Activated CD4-positive, alpha-beta memory T cell treated with anti-CD3 and anti-CD28 coated beads for 36 hours (primary cell): ENCODE measurements at regions of chr19 and their contacts with region 1.

Region 1: GRCh38 chr19:10928525-10929401 is at the starts of genes TIMM29 and YIPF2:
- DNase-seq: peak; percentile 97
- H3K4me3 Mint-ChIP-seq: peak within 1 kb of the TSS; percentile 92
- H3K27ac Mint-ChIP-seq: peak within 1 kb of the TSS; percentile 81
- H3K4me1 Mint-ChIP-seq: peaks cover 21% of the 10 kb centered on the region
- H3K27me3 Mint-ChIP-seq: no peaks in the 10 kb centered on the region
- total RNA-seq, gene TIMM29: 15.6 to 16.4 TPM
- total RNA-seq, gene YIPF2: 25.6 to 28.4 TPM

Region 2: GRCh38 chr19:10784257-10784656 is 144.5 kb before region 1 on chr19:
- CTCF ChIA-PET with region 1: no interaction called
- POLR2A ChIA-PET with region 1: no interaction called
- intact Hi-C with region 1: no loop called
- DNase-seq: no peak
- H3K4me3 Mint-ChIP-seq: no peak overlapping the region
- H3K27ac Mint-ChIP-seq: no peak overlapping the region
- H3K4me1 Mint-ChIP-seq: no peaks in the 10 kb centered on the region
- H3K27me3 Mint-ChIP-seq: no peaks in the 10 kb centered on the region

Region 3: GRCh38 chr19:10876459-10877240 is 52.1 kb before region 1 on chr19:
- CTCF ChIA-PET with region 1: interaction called, 3 read pairs
- POLR2A ChIA-PET with region 1: no interaction called
- intact Hi-C with region 1: loop called (anchors 2 kb)
- DNase-seq: peak; percentile 40
- H3K4me3 Mint-ChIP-seq: no peak overlapping the region
- H3K27ac Mint-ChIP-seq: peak overlapping the region; percentile 52
- H3K4me1 Mint-ChIP-seq: peaks cover 38% of the 10 kb centered on the region
- H3K27me3 Mint-ChIP-seq: no peaks in the 10 kb centered on the region

Region 4: GRCh38 chr19:10887616-10888367 is 41.0 kb before region 1 on chr19:
- CTCF ChIA-PET with region 1: no interaction called
- POLR2A ChIA-PET with region 1: no interaction called
- intact Hi-C with region 1: no loop called
- DNase-seq: no peak
- H3K4me3 Mint-ChIP-seq: no peak overlapping the region
- H3K27ac Mint-ChIP-seq: no peak overlapping the region
- H3K4me1 Mint-ChIP-seq: peaks cover 2% of the 10 kb centered on the region
- H3K27me3 Mint-ChIP-seq: no peaks in the 10 kb centered on the region

Region 5: DNA sequence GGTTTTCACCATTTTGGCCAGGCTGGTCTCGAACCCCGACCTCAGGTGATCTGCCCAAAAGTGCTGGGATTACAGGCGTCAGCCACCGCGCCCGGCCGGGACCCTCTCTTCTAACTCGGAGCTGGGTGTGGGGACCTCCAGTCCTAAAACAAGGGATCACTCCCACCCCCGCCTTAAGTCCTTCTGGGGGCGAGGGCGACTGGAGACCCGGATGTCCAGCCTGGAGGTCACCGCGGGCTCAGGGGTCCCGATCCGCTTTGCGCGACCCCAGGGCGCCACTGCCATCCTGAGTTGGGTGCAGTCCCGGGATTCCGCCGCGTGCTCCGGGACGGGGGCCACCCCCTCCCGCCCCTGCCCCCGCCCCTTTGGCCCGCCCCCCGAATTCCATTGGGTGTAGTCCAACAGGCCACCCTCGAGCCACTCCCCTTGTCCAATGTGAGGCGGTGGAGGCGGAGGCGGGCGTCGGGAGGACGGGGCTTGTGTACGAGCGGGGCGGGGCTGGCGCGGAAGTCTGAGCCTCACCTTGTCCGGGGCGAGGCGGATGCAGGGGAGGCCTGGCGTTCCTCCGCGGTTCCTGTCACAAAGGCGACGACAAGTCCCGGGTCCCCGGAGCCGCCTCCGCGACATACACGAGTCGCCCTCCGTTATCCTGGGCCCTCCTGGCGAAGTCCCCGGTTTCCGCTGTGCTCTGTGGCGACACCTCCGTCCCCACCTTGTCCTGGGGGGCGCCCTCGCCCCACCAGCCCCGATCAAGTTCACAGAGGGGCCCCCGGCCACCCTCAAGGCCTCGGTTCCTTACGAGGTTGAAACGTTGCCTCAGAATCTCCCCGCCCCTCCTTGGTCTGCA is 161.5 kb after region 1 on chr19:
- CTCF ChIA-PET with region 1: no interaction called
- POLR2A ChIA-PET with region 1: no interaction called
- intact Hi-C with region 1: loop called (anchors 5 kb)
- DNase-seq: peak; percentile 99
- H3K4me3 Mint-ChIP-seq: peak overlapping the region; percentile 95
- H3K27ac Mint-ChIP-seq: peak overlapping the region; percentile 98
- H3K4me1 Mint-ChIP-seq: peaks cover 45% of the 10 kb centered on the region
- H3K27me3 Mint-ChIP-seq: no peaks in the 10 kb centered on the region